ENCODE measurements at regions of chr1 and their contacts with region 1.

Region 1: DNA sequence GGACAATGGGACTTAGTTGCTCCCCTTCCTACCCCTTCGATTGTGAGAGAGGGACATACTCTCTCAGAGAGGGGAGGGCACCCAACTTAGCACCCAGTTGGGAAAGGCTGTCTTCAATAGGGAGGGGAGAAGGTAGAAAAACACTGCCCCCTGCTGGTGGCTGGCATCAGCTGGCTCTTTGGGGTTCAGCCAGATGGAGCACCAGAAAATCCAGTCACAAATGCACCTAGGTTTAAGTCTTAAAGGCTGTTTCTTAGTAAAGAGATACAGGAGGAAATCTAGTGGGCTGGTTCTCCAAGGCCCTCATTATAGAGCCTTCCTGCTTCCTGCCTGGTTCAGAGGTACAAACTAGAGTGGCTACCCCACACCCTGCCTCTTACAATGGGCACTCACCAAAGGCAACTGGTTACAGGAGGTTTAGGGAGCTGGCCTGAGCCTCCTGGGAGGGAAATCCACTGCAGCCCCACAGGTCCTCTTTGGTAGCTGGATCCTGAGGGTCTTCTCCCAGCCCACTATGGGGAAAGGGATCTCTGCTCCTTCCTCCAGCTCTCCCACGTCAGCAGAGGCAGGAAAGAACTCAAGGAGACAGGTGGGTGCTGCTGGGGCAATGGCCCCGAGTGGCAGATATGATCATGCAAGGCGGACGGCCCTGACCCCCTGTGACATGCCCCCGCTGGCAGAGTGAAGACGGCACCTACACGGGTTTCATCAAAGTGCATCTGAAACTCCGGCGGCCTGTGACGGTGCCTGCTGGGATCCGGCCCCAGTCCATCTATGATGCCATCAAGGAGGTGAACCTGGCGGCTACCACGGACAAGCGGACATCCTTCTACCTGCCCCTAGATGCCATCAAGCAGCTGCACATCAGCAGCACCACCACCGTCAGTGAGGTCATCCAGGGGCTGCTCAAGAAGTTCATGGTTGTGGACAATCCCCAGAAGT is 28.3 kb downstream of the EIF2D start:
- DNase-seq: peak; percentile 83
- ATAC-seq: peak; percentile 59

Region 2: GRCh38 chr1:205919026-205919746 is 664.8 kb before region 1 on chr1:
- intact Hi-C with region 1: loop called (anchors 10 kb)
- DNase-seq: peak; percentile 82
- ATAC-seq: peak; percentile 62

Region 3: DNA sequence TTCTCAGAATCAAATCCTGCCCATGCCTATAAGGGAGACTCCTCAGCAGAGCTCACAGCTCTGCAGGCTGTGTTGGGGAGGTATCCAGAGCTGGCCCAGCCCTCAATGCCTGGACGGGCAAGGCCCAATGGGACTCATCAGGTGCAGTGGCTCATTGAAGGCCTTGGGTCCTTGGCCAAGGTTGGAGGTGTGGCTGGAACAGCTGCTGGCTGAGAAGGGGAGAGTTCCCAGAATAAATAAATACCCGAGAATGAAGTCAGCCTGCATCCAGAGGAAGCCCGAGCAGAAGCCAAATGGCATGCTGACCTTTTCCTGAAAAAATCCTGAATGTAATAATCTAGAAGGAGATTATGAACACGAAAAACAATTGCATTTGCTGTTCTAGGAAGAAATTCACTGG is 138.9 kb before region 1 on chr1:
- intact Hi-C with region 1: no loop called
- DNase-seq: peak; percentile 65
- ATAC-seq: peak; percentile 92

Region 4: GRCh38 chr1:206489980-206490770 is 93.8 kb before region 1 on chr1:
- intact Hi-C with region 1: loop called (anchors 2 kb)
- DNase-seq: peak; percentile 84
- ATAC-seq: peak; percentile 89

Region 5: DNA sequence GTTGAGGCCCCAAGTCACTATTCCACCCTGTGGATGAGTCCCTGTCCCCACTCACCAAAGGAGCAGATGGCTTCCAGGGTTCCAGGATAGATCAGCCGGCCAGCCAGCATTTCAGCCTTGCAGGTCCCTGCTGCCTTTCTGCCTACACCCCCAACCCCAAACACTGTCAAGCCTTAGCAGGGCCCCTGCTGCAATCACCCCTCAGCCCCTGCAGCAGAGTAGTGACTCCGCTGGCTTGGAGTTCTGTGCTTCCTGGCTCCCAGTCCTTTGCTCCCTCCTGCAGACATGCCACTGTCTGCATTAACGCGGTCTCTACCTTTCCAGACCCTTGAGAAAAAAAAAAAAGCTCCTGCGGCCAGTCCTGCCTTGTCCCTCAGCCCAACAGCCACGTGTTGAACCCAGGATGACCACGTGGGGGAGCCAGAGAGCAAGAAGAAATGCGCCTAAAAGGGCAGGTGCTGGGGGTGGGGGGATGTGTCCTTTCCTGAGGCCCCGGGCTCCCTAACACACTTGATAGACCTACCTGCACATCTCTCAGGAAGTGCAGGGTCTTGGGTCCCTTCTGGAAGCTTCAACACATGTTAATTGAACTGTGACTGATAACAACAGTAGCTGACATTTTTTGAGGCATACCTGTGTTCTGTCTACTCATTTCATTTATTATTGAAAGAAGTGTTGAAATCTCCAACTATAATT is 39.3 kb before region 1 on chr1:
- intact Hi-C with region 1: loop called (anchors 2 kb)
- DNase-seq: peak; percentile 80
- ATAC-seq: peak; percentile 78